ENCODE measurements at regions of chr18 and their contacts with region 1.

Region 1: GRCh38 chr18:63199743-63200241 is 119.8 kb downstream of the BCL2 start:
- DNase-seq: no peak
- ATAC-seq: peak; percentile 87
- H3K4me3 Mint-ChIP-seq: no peak overlapping the region
- H3K27ac Mint-ChIP-seq: no peak overlapping the region
- H3K4me1 Mint-ChIP-seq: peaks cover 34% of the 10 kb centered on the region
- H3K27me3 Mint-ChIP-seq: no peaks in the 10 kb centered on the region

Region 2: GRCh38 chr18:63007231-63007630 is 192.6 kb before region 1 on chr18:
- POLR2A ChIA-PET with region 1: no interaction called
- DNase-seq: no peak
- ATAC-seq: no peak
- H3K4me3 Mint-ChIP-seq: no peak overlapping the region
- H3K27ac Mint-ChIP-seq: no peak overlapping the region
- H3K4me1 Mint-ChIP-seq: peaks cover 1% of the 10 kb centered on the region
- H3K27me3 Mint-ChIP-seq: peaks cover 46% of the 10 kb centered on the region

Region 3: DNA sequence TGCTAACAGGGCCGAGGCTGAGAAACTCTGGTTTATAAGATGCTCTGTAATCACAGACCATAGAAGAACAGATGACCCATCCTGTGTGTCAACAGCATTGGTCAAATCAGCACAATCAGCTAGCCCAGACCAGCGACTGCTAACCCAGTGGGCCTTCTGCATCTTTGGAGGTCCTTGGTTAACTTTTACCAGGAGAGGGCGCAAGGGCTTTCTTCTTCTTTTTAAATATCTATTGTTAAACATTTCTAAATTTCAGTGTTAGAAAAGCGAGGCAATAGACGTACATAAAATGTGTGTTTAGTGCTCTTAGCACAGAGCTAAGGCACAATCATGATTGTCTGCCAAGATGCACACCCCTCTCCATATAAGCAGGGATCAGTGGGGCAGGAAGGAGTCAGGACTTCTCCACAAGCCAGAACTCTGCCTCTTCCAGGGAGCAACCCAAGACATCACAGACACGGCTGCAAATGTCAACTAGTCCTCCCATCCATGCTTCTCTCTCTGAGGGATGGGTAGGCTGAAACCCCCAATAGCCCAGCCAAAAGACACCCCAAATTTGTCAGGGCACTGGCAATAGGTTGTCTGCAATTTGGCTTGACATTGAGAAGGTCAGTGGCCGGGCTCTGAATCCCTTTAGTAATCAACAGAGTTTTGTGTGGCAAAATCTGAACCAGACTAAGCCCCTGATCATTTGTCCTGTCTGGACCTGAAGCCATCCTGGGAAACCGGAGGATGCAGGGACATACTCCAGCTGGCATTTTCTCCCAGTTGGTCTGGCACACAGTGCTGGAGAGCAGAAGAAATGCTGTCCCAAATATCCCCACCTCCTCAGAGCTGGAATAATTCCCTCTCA is 68.5 kb before region 1 on chr18:
- POLR2A ChIA-PET with region 1: interaction called, 11 read pairs
- DNase-seq: no peak
- ATAC-seq: peak; percentile 55
- H3K4me3 Mint-ChIP-seq: no peak overlapping the region
- H3K27ac Mint-ChIP-seq: peak overlapping the region; percentile 69
- H3K4me1 Mint-ChIP-seq: peaks cover 37% of the 10 kb centered on the region
- H3K27me3 Mint-ChIP-seq: no peaks in the 10 kb centered on the region

Region 4: DNA sequence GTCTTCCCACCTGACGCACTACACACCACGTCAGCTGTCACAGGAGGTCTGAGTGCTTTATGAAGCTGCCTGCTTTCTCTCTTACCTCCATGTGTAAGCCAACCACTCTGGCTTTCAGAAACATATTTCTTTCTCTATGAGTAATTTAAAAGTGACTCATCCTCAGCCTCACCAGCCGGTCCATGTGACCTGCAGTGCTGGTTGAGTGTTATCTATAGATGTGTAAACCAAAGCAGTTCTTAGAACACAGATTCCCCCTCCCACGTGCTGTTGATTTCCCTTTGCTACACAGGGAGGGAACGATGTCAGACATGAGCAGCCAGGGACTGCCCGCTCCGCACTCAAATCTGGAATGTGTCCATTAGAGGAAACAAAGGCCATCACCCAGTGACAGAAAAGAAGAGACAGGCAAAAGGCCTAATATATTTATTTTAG is 38.0 kb before region 1 on chr18:
- POLR2A ChIA-PET with region 1: interaction called, 26 read pairs
- DNase-seq: peak; percentile 64
- ATAC-seq: peak; percentile 92
- H3K4me3 Mint-ChIP-seq: peak overlapping the region; percentile 81
- H3K27ac Mint-ChIP-seq: peak overlapping the region; percentile 90
- H3K4me1 Mint-ChIP-seq: peaks cover 91% of the 10 kb centered on the region
- H3K27me3 Mint-ChIP-seq: no peaks in the 10 kb centered on the region

Region 5: GRCh38 chr18:63182310-63182772 is 17.5 kb before region 1 on chr18:
- POLR2A ChIA-PET with region 1: interaction called, 11 read pairs
- DNase-seq: no peak
- ATAC-seq: no peak
- H3K4me3 Mint-ChIP-seq: no peak overlapping the region
- H3K27ac Mint-ChIP-seq: no peak overlapping the region
- H3K4me1 Mint-ChIP-seq: peaks cover 39% of the 10 kb centered on the region
- H3K27me3 Mint-ChIP-seq: no peaks in the 10 kb centered on the region

Region 6: GRCh38 chr18:63216516-63217311 is 16.9 kb after region 1 on chr18:
- POLR2A ChIA-PET with region 1: interaction called, 53 read pairs
- DNase-seq: no peak
- ATAC-seq: peak; percentile 40
- H3K4me3 Mint-ChIP-seq: peak overlapping the region; percentile 77
- H3K27ac Mint-ChIP-seq: peak overlapping the region; percentile 86
- H3K4me1 Mint-ChIP-seq: peaks cover 83% of the 10 kb centered on the region
- H3K27me3 Mint-ChIP-seq: no peaks in the 10 kb centered on the region

Measured in activated naive CD8-positive, alpha-beta T cell treated with anti-CD3 and anti-CD28 coated beads, Interleukin-2, amount 10 ng/mL, durations not matched to agents 7 days and 5 days (primary cell).